HCT116 (cell line): ENCODE measurements at regions of chr6 and their contacts with region 1.

Region 1: GRCh38 chr6:52995913-52996645 is 995 bp upstream of the GSTA4 start:
- DNase-seq: peak; percentile 76
- ATAC-seq: peak; percentile 9; the same call in 1 of the 2 replicates
- H3K4me3 ChIP-seq: peak overlapping the region; percentile 12 to 21; a peak in 2 of 4 replicates
- H3K27ac ChIP-seq: no peak overlapping the region
- H3K4me1 ChIP-seq: peaks cover 8 to 20% of the 10 kb centered on the region in 2 experiments
- H3K27me3 ChIP-seq: no peaks in the 10 kb centered on the region
- CTCF ChIP-seq: no peak
- POLR2A ChIP-seq: no peak
- RAD21 ChIP-seq: no peak

Region 2: DNA sequence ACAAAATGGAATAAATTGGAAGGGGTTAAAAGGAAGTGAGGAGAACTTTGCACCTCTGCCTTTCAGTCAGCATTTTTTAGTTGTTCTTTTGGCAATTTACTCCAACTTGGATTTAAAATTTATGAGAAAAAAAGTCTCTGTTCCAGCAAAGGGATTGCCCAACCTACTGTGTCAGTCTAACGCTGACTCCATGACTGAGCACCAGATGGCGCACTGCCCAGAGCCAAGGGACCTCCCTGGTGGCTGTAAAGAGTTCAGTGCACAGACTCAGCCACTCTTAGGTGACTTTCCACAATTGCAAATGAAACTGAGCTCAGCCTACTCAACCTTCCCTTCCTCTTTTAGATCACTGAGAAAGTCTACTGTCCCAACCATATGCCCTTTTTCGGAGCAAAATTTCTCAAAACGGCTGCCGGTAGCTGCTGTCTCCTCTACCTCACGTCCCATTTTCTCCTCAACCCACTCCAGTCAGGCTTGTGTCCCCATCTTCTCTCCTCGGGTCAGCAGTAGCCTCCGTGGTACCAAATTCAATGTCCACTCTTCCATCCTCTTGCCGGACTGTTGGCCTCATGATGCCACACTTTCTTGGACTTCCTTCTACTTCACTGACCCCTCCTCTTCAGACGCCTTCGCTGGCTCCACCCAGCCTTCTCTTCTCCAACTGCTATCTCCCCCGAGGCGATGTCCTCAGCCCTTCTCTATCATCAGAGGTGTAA is 271.5 kb before region 1 on chr6:
- CTCF ChIA-PET with region 1: interaction called, 3 read pairs
- POLR2A ChIA-PET with region 1: no interaction called
- RAD21 ChIA-PET with region 1: no interaction called
- intact Hi-C with region 1: loop called (anchors 1 kb)
- DNase-seq: peak; percentile 63
- ATAC-seq: peak; percentile 100
- H3K4me3 ChIP-seq: no peak overlapping the region
- H3K27ac ChIP-seq: no peak overlapping the region
- H3K4me1 ChIP-seq: peaks cover 0 to 15% of the 10 kb centered on the region in 2 experiments; a peak in 1 of 4 replicates
- H3K27me3 ChIP-seq: no peaks in the 10 kb centered on the region
- CTCF ChIP-seq: peak; percentile 78 to 97 (median 89)
- POLR2A ChIP-seq: no peak
- RAD21 ChIP-seq: peak; percentile 67

Region 3: DNA sequence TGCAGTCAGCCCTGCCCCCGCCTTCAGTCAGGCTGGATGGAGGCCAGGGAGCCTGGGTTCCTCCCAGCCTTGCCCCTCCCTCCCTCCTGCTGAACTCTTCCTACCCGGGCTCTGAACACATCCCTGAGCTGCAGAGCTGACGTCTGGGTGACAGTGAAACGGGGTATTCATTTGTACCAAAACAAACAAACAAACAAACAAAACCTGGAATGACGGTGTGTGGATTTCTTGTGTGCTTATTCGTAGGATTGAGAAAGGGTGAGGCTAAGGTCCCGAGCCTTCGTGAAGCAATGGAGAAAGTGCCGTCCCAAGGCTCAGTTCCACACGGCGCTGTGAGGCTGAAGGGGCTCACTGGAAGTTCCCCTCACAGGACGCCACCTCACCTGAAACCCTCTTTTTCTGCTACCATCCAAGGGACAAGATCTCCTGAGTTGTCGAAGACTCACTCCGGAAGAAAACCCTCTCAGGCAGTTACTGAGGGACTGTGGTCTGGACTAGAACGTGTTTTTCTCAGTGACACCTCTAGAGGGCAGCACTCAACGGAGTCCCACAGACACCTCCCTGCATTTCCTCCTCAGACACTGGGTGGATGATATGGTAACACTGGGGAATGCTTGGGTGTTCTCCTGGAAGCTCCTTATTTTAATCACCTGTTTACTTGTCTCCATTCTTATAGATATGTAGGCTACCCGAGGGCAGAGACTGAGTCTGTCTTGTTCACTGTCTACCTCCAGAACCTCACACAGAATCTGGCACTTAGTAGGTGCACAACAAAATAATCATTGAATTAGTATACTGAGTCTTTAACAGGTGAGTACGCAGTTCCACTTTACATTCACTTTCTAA is 113.9 kb before region 1 on chr6:
- CTCF ChIA-PET with region 1: interaction called, 3 read pairs
- POLR2A ChIA-PET with region 1: no interaction called
- RAD21 ChIA-PET with region 1: no interaction called
- intact Hi-C with region 1: loop called (anchors 2 kb)
- DNase-seq: peak; percentile 55
- ATAC-seq: peak; percentile 97
- H3K4me3 ChIP-seq: peak overlapping the region; percentile 62 to 69
- H3K27ac ChIP-seq: peak overlapping the region; percentile 49
- H3K4me1 ChIP-seq: peaks cover 3 to 20% of the 10 kb centered on the region in 2 experiments
- H3K27me3 ChIP-seq: no peaks in the 10 kb centered on the region
- CTCF ChIP-seq: peak; percentile 78 to 85 (median 82)
- POLR2A ChIP-seq: no peak
- RAD21 ChIP-seq: peak; percentile 66

Region 4: GRCh38 chr6:52984247-52984646 is 11.8 kb before region 1 on chr6:
- CTCF ChIA-PET with region 1: no interaction called
- POLR2A ChIA-PET with region 1: no interaction called
- RAD21 ChIA-PET with region 1: no interaction called
- intact Hi-C with region 1: no loop called
- DNase-seq: no peak
- ATAC-seq: no peak
- H3K4me3 ChIP-seq: no peak overlapping the region
- H3K27ac ChIP-seq: no peak overlapping the region
- H3K4me1 ChIP-seq: no peaks in the 10 kb centered on the region
- H3K27me3 ChIP-seq: no peaks in the 10 kb centered on the region
- CTCF ChIP-seq: no peak
- POLR2A ChIP-seq: no peak
- RAD21 ChIP-seq: no peak

Region 5: DNA sequence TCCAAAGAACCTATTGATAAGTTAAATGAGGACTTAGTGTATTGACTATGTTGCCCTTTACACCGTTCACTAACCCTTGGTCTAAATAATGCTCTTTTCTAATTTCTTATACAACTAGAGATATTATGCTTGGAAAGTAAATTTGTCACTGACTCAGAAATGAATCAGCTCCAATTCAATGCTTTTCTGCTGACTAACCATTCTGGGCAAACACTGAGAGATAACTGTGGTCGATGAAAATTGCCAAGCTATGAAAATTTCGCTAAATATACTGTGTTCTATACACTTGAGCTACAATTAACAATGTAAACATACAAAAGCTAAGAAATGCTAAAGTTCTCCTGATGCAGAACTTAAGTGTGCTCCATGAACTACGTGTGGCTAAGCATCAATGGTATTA is 46.0 kb after region 1 on chr6:
- CTCF ChIA-PET with region 1: interaction called, 10 read pairs
- POLR2A ChIA-PET with region 1: interaction called, 5 read pairs
- RAD21 ChIA-PET with region 1: no interaction called
- intact Hi-C with region 1: loop called (anchors 2 kb)
- DNase-seq: peak; percentile 54
- ATAC-seq: peak; percentile 45
- H3K4me3 ChIP-seq: peak overlapping the region in 1 of 2 experiments; percentile 43; a peak in 2 of 4 replicates
- H3K27ac ChIP-seq: peak overlapping the region; percentile 28; the same call in 1 of the 2 replicates
- H3K4me1 ChIP-seq: peaks cover 30 to 41% of the 10 kb centered on the region in 2 experiments
- H3K27me3 ChIP-seq: no peaks in the 10 kb centered on the region
- CTCF ChIP-seq: no peak
- POLR2A ChIP-seq: no peak
- RAD21 ChIP-seq: no peak